Activated CD4-positive, alpha-beta T cell treated with anti-CD3 and anti-CD28 coated beads, Interleukin-2, amount 10 ng/mL, durations not matched to agents 24 days and 14 days (primary cell): ENCODE measurements at regions of chr6 and their contacts with region 1.

Region 1: GRCh38 chr6:13711733-13712598 is at the start of gene RANBP9:
- DNase-seq: peak; percentile 96
- H3K4me3 Mint-ChIP-seq: peak within 1 kb of the TSS; percentile 96
- H3K27ac Mint-ChIP-seq: peak within 1 kb of the TSS; percentile 98
- H3K4me1 Mint-ChIP-seq: peaks cover 40% of the 10 kb centered on the region
- H3K27me3 Mint-ChIP-seq: no peaks in the 10 kb centered on the region
- total RNA-seq, gene RANBP9: 52.6 and 56.2 TPM in 2 replicates

Region 2: DNA sequence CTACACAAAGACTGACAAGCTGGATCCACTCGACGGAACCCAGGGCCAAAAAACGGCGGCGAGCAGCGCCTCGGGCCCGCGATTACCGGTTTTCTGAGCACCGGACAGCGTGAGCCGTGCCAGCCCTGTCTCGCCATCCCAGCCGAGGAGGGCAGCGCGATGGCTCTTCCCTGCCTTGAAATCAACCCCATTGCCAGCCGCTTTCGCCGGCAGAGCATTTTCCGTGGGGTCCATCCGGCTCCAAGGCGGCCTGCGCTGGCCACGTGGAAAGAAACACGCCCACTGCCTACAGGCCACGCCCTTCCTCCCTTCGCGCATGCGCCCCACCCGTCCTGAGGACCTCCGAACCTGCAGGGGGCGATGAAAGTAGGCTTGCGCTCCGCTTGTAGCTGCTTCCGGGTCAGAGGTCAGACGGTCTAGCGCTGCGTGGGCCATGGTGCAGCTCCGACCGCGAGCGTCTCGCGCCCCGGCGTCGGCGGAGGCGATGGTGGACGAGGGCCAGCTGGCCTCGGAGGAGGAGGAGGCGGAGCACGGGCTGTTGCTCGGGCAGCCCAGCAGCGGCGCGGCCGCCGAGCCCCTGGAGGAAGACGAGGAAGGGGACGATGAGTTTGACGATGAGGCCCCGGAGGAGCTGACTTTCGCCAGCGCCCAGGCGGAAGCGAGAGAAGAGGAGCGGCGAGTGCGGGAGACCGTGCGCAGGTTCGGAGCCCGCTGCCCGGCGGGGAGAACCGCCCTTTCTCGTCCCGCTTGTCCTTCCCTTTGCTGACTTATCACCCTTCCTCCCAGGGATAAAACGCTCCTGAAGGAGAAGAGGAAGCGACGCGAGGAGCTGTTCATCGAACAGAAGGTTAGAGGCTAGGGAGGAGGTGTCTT is 96.8 kb before region 1 on chr6 and contains the start of gene NOL7:
- intact Hi-C with region 1: loop called (anchors 1 kb)
- DNase-seq: peak; percentile 100
- H3K4me3 Mint-ChIP-seq: peak within 1 kb of the TSS; percentile 92
- H3K27ac Mint-ChIP-seq: peak within 1 kb of the TSS; percentile 96
- H3K4me1 Mint-ChIP-seq: peaks cover 33% of the 10 kb centered on the region
- H3K27me3 Mint-ChIP-seq: no peaks in the 10 kb centered on the region
- total RNA-seq, gene NOL7: 103 and 104 TPM in 2 replicates

Region 3: DNA sequence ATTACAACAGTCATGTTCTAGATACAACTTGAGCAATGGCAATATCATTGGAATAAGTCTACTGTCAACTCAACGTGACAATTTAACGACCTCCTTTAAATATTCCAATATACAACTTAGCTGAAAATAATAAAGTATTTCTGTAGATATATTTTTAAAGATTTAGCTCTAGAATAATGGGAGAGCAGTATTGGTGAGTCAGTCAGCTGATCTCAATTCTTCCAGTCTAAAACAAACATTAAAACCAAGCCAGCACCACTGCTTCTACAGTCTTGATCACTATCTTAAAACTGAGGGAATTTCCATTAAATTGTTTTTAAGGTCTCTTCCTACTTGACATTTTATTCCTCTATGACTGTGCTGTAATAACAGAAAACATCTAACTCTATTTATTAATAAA is 58.7 kb before region 1 on chr6:
- intact Hi-C with region 1: no loop called
- DNase-seq: no peak
- H3K4me3 Mint-ChIP-seq: no peak overlapping the region
- H3K27ac Mint-ChIP-seq: no peak overlapping the region
- H3K4me1 Mint-ChIP-seq: peaks cover 15% of the 10 kb centered on the region
- H3K27me3 Mint-ChIP-seq: no peaks in the 10 kb centered on the region

Region 4: GRCh38 chr6:13668291-13668928 is 43.6 kb before region 1 on chr6:
- intact Hi-C with region 1: loop called (anchors 2 kb)
- DNase-seq: no peak
- H3K4me3 Mint-ChIP-seq: peak overlapping the region; percentile 14
- H3K27ac Mint-ChIP-seq: peak overlapping the region; percentile 65
- H3K4me1 Mint-ChIP-seq: peaks cover 61% of the 10 kb centered on the region
- H3K27me3 Mint-ChIP-seq: no peaks in the 10 kb centered on the region

Region 5: DNA sequence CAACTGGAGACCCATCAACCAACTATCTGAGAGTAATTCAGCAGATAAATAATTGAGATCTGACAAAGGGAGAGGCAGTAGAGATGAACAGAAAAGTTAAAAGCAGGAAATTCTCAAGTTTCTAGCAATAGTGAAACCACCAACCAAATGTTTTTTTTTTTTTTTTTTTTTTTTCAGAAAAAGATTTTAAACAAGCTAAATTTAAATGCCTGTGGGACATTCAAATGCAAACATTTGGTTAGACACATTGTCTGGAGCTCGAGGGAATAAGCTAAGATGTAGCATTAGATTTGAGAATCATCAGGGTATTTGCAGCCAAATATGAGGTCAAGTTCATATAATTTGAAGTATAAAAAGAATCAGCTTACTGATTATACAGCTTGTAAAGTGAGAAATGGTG is 16.7 kb before region 1 on chr6:
- intact Hi-C with region 1: loop called (anchors 2 kb)
- DNase-seq: no peak
- H3K4me3 Mint-ChIP-seq: peak overlapping the region; percentile 47
- H3K27ac Mint-ChIP-seq: peak overlapping the region; percentile 5
- H3K4me1 Mint-ChIP-seq: peaks cover 39% of the 10 kb centered on the region
- H3K27me3 Mint-ChIP-seq: no peaks in the 10 kb centered on the region

Region 6: GRCh38 chr6:13787137-13787536 is 75.2 kb after region 1 on chr6:
- intact Hi-C with region 1: loop called (anchors 2 kb)
- DNase-seq: no peak
- H3K4me3 Mint-ChIP-seq: peak overlapping the region; percentile 38
- H3K27ac Mint-ChIP-seq: peak overlapping the region; percentile 80
- H3K4me1 Mint-ChIP-seq: peaks cover 26% of the 10 kb centered on the region
- H3K27me3 Mint-ChIP-seq: no peaks in the 10 kb centered on the region

Region 7: DNA sequence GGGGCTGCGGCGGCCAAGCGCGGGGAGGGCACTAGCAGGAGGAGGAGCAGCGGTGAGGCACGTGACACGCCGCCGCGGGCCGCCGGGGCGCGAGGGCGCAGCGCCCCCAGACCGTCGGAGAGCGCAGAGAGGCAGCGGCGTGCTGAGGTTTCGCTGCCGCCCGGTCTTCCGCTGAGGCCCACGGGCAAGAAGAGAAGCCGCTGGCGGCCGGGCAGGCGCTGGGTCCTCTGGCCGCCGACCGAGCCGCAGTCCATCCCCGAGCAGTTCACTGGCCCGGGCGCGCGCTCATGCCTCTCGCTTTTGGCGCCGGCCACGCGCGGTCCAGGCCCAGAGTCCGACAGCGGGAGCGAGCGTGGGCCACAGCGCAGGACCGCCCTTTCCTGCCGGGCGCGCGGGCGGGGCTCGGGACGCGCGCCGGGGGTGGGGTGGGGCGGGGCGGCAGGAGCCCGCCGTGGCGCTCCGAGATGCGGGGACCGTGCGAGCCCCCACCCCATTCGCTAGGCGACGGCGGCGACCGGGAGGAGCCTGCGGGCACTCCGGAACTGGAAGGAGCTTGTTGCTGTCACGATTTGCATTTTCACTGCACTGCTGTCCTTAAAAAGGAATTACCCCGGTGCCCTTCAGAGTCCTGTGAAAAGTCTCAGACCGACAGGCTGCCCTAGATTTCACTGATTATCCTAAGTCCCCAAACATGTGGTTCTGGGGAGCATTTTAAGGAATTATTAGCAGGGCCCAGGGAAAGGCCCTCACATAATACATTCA is 102.4 kb after region 1 on chr6 and contains the start of gene MCUR1:
- intact Hi-C with region 1: loop called (anchors 1 kb)
- DNase-seq: peak; percentile 95
- H3K4me3 Mint-ChIP-seq: peak within 1 kb of the TSS; percentile 88
- H3K27ac Mint-ChIP-seq: peak within 1 kb of the TSS; percentile 84
- H3K4me1 Mint-ChIP-seq: peaks cover 28% of the 10 kb centered on the region
- H3K27me3 Mint-ChIP-seq: peaks cover 16% of the 10 kb centered on the region
- total RNA-seq, gene MCUR1: 39.0 and 43.7 TPM in 2 replicates